Dorsolateral prefrontal cortex (tissue), 120 donors: ENCODE measurements at regions of chr7 and their contacts with region 1.

Region 1: GRCh38 chr7:140673063-140673773 is 473 bp downstream of the ADCK2 start:
- DNase-seq: peak in 5 of 10 donors; percentile 26 to 74 (median 45)
- H3K4me3 ChIP-seq: peak overlapping the region; percentile 58 to 98 (median 83)
- H3K27ac ChIP-seq: peak overlapping the region; percentile 46 to 97 (median 90)
- H3K27me3 ChIP-seq: no peaks in the 10 kb centered on the region
- CTCF ChIP-seq: peak in 5 of 56 donors; percentile 6 to 25 (median 7)

Region 2: GRCh38 chr7:140696680-140697446 is 23.6 kb after region 1 on chr7 and contains the start of gene NDUFB2:
- intact Hi-C with region 1: loop called in 1 of 2 experiments (anchors 2 kb)
- DNase-seq: peak; percentile 73 to 96 (median 84)
- H3K4me3 ChIP-seq: peak within 1 kb of the TSS; percentile 59 to 97 (median 86)
- H3K27ac ChIP-seq: peak within 1 kb of the TSS; percentile 72 to 100 (median 97)
- H3K27me3 ChIP-seq: no peaks in the 10 kb centered on the region
- CTCF ChIP-seq: peak in 26 of 56 donors; percentile 3 to 43 (median 17)
- total RNA-seq, gene NDUFB2: 147 to 282 (median 221) TPM

Region 3: DNA sequence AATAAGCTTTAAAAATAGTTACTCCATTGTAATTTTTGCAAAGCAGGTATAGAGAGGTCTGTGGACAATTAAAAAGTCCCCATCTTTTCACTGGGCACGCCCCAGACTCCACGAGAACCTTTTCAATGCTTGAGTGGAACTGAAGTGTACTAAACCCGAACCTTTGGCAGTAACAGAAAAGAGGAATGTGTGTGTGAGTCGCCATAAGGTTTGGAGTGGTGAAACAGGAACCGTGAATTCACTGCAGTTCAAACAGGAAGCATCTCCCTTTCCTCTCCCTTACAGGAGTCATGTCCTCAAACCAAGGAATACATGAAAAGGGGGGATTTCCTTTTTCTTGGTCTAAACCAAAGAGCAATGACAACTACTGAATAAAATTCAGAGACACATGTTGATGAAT is 46.5 kb after region 1 on chr7:
- intact Hi-C with region 1: no loop called
- DNase-seq: no peak
- H3K4me3 ChIP-seq: no peak overlapping the region
- H3K27ac ChIP-seq: no peak overlapping the region
- H3K27me3 ChIP-seq: no peaks in the 10 kb centered on the region
- CTCF ChIP-seq: no peak

Region 4: GRCh38 chr7:140810830-140811556 is 137.8 kb after region 1 on chr7:
- intact Hi-C with region 1: loop called in 1 of 2 experiments (anchors 10 kb)
- DNase-seq: peak in 4 of 10 donors; percentile 47 to 69 (median 58)
- H3K4me3 ChIP-seq: no peak overlapping the region
- H3K27ac ChIP-seq: no peak overlapping the region
- H3K27me3 ChIP-seq: no peaks in the 10 kb centered on the region
- CTCF ChIP-seq: peak; percentile 54 to 87 (median 80)

Region 5: DNA sequence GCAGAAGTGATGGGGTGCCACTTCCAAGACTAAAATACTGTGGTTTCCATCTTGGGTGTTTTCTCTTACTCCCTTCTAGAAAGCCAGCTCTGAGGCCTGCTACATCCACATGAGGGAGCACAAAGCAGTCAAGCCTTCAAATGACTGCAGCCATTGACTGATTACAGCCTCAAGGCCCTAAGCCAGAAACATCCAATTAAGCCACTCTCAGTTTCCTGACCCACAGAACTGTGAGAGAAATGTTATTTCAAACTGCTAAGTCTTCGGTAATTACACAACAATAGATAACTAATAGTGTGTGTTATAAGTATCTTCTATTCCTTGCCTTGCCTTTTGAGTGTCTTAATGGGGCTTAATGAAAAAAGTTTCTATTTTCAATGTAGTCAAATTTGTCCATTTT is 226.7 kb after region 1 on chr7:
- intact Hi-C with region 1: no loop called
- DNase-seq: peak in 1 of 10 donors; percentile 38
- H3K4me3 ChIP-seq: no peak overlapping the region
- H3K27ac ChIP-seq: peak overlapping the region in 15 of 59 donors; percentile 1 to 60 (median 42)
- H3K27me3 ChIP-seq: no peaks in the 10 kb centered on the region
- CTCF ChIP-seq: peak in 26 of 56 donors; percentile 12 to 61 (median 30)